CD4-positive, alpha-beta memory T cell (primary cell): ENCODE measurements at regions of chr3 and their contacts with region 1.

Region 1: GRCh38 chr3:105369500-105370371 is 3.0 kb downstream of the ALCAM start:
- DNase-seq: peak; percentile 60 to 68 (median 63)
- H3K4me3 ChIP-seq: peak overlapping the region; percentile 67 to 80
- H3K4me3 Mint-ChIP-seq: peak overlapping the region; percentile 91 to 97 (median 96)
- H3K27ac ChIP-seq: peak overlapping the region; percentile 83
- H3K27ac Mint-ChIP-seq: peak overlapping the region; percentile 97 to 99 (median 99)
- H3K4me1 ChIP-seq: peaks cover 21% of the 10 kb centered on the region
- H3K4me1 Mint-ChIP-seq: peaks cover 13 to 45% (median 26%) of the 10 kb centered on the region in 4 donors
- H3K27me3 ChIP-seq: no peaks in the 10 kb centered on the region
- H3K27me3 Mint-ChIP-seq: peaks cover 2 to 14% of the 10 kb centered on the region in 2 donors

Region 2: DNA sequence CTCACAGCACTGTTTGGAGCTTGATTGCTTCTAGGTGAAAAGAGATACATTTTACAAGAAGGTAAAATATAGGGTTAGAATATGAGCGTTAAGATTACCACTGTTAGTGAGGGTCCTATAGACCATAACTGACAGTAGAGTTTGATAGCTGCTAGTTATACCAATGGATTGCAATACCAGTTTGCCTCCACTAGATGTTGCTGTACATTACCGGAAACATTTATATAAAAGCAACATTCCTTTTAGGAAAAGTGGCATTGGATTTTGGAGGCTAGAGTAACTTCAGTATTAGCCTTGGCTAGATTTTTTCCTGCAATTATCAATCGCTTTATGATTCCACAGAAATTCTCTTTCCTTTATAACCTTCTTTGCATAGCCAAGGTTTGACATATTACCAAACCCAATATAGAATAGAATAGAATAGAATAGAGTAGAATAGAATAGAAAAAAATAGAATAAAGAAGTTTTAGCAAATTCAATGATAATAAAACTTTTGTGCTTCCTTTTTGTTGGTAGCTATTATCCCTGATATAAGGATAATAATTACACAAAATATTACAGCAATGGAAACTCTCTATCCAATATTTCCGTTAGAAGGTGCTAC is 1096.6 kb before region 1 on chr3:
- CTCF ChIA-PET with region 1: no interaction called
- POLR2A ChIA-PET with region 1: no interaction called
- intact Hi-C with region 1: loop called (anchors 2 kb)
- DNase-seq: no peak
- H3K4me3 ChIP-seq: no peak overlapping the region
- H3K4me3 Mint-ChIP-seq: no peak overlapping the region
- H3K27ac ChIP-seq: no peak overlapping the region
- H3K27ac Mint-ChIP-seq: no peak overlapping the region
- H3K4me1 ChIP-seq: no peaks in the 10 kb centered on the region
- H3K4me1 Mint-ChIP-seq: no peaks in the 10 kb centered on the region
- H3K27me3 ChIP-seq: no peaks in the 10 kb centered on the region
- H3K27me3 Mint-ChIP-seq: no peaks in the 10 kb centered on the region

Region 3: DNA sequence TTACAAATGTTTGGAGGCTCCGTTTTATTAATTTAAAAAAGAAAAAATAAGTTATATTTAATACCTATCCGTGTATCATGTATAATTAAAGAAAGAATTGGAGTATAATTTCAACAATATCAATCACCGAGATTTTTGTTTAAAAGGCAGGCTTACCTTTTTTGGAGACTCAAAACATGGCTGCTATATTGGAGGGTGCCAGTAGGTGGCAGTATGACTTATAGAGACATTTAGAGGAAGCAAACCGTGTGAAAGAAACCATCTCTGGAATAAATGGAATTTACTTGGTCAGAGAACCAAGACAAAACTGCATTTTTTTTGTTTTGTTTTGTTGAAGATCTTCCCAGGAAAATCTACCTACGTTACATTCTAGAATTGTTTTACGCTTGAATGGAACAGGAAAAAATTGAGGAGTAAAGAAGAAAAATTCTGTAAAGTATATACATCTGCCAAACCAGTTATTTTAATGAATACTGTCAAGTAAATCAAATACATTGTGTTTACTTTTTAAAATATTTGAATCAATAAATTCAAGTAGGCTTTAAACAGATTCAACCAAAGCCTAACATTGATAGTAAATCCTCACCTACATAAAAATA is 805.6 kb before region 1 on chr3:
- CTCF ChIA-PET with region 1: interaction called, 3 read pairs
- POLR2A ChIA-PET with region 1: no interaction called
- intact Hi-C with region 1: loop called (anchors 1 kb)
- DNase-seq: peak; percentile 46 to 58 (median 55)
- H3K4me3 ChIP-seq: no peak overlapping the region
- H3K4me3 Mint-ChIP-seq: no peak overlapping the region
- H3K27ac ChIP-seq: no peak overlapping the region
- H3K27ac Mint-ChIP-seq: no peak overlapping the region
- H3K4me1 ChIP-seq: no peaks in the 10 kb centered on the region
- H3K4me1 Mint-ChIP-seq: no peaks in the 10 kb centered on the region
- H3K27me3 ChIP-seq: no peaks in the 10 kb centered on the region
- H3K27me3 Mint-ChIP-seq: peaks cover 0 to 1% of the 10 kb centered on the region in 2 donors

Region 4: DNA sequence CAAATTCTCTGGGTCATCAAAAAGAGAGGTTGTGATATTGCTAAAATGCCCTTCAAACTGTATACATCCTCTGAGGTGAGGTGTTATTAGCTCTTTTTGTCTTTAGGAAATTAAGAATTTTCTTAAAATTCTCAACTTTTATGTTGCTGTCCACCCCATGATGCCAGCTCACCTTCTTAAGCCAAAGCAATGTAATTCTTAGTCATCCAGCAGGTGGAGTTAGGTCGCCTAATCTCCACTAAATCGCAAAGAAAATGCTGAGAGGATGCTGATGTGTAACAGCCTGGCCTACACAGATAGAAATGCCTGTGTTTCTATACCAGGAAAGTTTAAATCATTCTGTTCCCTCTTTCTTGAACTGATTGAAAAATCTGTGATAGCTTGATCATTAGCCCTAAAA is 773.2 kb before region 1 on chr3:
- CTCF ChIA-PET with region 1: interaction called, 25 read pairs
- POLR2A ChIA-PET with region 1: interaction called, 3 read pairs
- intact Hi-C with region 1: loop called (anchors 1 kb)
- DNase-seq: peak in 4 of 5 donors; percentile 7 to 28 (median 20)
- H3K4me3 ChIP-seq: no peak overlapping the region
- H3K4me3 Mint-ChIP-seq: no peak overlapping the region
- H3K27ac ChIP-seq: no peak overlapping the region
- H3K27ac Mint-ChIP-seq: no peak overlapping the region
- H3K4me1 ChIP-seq: no peaks in the 10 kb centered on the region
- H3K4me1 Mint-ChIP-seq: no peaks in the 10 kb centered on the region
- H3K27me3 ChIP-seq: no peaks in the 10 kb centered on the region
- H3K27me3 Mint-ChIP-seq: no peaks in the 10 kb centered on the region

Region 5: DNA sequence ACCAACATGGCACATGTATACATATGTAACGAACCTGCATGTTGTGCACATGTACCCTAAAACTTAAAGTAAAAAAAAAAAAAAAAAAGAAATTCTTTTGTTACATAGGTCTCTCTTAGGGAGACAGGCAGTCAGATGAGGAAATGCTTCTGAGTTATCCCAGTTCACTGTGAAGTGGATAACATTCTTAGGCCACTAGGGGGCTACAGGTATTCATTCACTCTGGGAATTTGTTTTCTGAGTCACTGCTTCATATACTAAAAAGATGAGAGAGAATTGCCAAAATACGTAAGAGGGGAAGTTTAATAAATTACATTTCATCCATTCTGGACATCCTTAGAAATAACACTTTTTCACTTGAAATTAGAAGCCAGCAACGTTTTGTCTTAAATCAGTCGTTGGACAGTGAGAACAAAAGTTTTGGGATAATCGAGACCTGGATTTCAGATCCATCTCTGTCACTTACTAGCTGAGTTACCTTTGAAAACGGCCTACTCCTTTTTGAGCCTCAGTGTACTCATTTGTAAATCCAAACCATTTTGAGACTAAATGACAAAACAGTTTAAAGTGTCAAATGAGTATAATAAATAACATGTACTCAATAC is 741.4 kb before region 1 on chr3:
- CTCF ChIA-PET with region 1: no interaction called
- POLR2A ChIA-PET with region 1: no interaction called
- intact Hi-C with region 1: loop called (anchors 1 kb)
- DNase-seq: peak in 2 of 5 donors; percentile 5 to 6
- H3K4me3 ChIP-seq: no peak overlapping the region
- H3K4me3 Mint-ChIP-seq: no peak overlapping the region
- H3K27ac ChIP-seq: no peak overlapping the region
- H3K27ac Mint-ChIP-seq: no peak overlapping the region
- H3K4me1 ChIP-seq: no peaks in the 10 kb centered on the region
- H3K4me1 Mint-ChIP-seq: no peaks in the 10 kb centered on the region
- H3K27me3 ChIP-seq: no peaks in the 10 kb centered on the region
- H3K27me3 Mint-ChIP-seq: peaks cover 0 to 1% of the 10 kb centered on the region in 2 donors

Region 6: DNA sequence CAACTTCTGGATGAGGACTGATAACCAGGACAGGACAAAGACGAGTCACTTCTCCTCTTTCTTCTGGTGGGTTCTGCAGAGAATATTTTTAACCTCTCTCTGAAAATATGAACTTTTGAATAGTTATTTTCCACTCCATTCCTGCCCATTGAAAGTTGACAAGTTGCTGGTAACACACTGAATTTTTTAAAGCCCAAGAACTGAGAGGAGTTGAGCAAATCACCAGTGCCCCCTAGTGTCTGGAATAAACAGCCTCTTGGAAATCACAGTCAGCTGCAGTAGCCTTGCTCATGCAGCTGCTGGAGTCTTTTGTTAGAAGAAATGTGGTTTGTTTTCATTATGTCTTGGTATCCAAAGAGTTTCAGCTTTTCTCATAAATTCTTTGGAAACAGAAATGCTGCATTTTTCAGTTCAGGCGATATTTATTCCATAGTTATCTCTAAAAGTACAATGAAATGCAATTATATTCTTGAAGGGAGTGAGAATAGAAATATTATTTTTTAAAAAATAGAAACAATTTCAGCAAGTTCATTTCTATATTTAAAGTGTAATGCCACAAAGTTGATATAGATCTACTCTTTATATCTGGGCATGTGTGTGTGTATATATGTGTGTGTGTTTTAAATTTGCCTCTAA is 1240.0 kb after region 1 on chr3:
- CTCF ChIA-PET with region 1: interaction called, 5 read pairs
- POLR2A ChIA-PET with region 1: no interaction called
- intact Hi-C with region 1: loop called (anchors 1 kb)
- DNase-seq: peak; percentile 58 to 73 (median 68)
- H3K4me3 ChIP-seq: no peak overlapping the region
- H3K4me3 Mint-ChIP-seq: no peak overlapping the region
- H3K27ac ChIP-seq: no peak overlapping the region
- H3K27ac Mint-ChIP-seq: no peak overlapping the region
- H3K4me1 ChIP-seq: no peaks in the 10 kb centered on the region
- H3K4me1 Mint-ChIP-seq: peaks cover 1 to 6% (median 4%) of the 10 kb centered on the region in 4 donors
- H3K27me3 ChIP-seq: no peaks in the 10 kb centered on the region
- H3K27me3 Mint-ChIP-seq: peaks cover 0 to 1% of the 10 kb centered on the region in 2 donors